Esophagus muscularis mucosa (tissue), 4 donors: ENCODE measurements at regions of chr7 and their contacts with region 1.

Region 1: DNA sequence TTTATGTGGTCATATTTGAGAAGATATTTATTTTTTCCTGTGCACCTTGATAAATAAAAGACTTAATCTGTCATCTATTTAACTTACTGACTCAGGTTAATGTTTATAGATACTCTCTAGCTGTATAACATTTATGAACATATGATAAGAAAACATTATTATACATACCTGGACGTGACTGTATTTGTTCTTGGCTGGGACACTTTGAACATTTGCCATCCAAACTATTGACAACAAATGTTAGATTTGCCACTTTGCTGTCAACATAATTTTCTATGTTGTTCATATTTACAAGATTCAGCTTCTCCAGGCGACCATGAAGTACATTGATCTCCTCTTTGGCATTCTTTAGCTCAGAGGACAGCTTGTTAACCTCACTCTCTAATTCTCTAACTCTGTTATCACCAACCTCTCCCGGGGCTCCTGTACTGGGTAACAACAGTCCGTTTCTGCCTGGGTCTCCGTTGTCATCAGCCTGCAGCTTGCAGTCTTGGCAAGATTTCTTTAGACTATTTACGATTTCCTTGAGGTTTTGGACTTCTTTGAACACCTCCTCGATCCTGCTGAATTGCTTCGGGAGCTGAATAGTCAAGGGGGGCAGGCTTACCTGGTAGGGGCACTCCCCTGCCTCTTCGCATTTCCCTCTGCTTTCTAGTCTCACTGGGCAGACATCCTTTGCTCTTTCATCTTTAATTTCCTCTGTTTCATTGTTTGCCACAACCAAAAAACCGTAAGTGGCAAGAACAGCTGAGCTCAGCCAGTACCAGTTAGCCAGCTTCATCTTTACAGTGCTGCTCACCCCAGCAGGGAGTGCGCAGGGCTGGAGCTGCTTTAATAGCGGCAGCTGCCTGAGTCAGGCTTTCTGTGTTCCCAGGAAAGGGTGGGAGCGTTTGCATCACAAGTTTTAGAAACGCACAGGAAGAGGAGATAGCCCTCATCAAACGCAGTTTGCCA is at the start of gene FGL2:
- DNase-seq: no peak
- H3K4me3 ChIP-seq: peak within 1 kb of the TSS; percentile 51 to 71 (median 66)
- H3K27ac ChIP-seq: peak within 1 kb of the TSS; percentile 81 to 88 (median 83)
- H3K4me1 ChIP-seq: peaks cover 7 to 39% (median 29%) of the 10 kb centered on the region in 4 donors
- H3K27me3 ChIP-seq: no peaks in the 10 kb centered on the region
- CTCF ChIP-seq: no peak
- EP300 ChIP-seq: no peak
- POLR2A ChIP-seq: no peak
- total RNA-seq, gene FGL2: 217 to 349 (median 305) TPM

Region 2: GRCh38 chr7:77247206-77247850 is 48.0 kb after region 1 on chr7:
- intact Hi-C with region 1: loop called (anchors 5 kb)
- DNase-seq: no peak
- H3K4me3 ChIP-seq: no peak overlapping the region
- H3K27ac ChIP-seq: no peak overlapping the region
- H3K4me1 ChIP-seq: peaks cover 16 to 52% (median 45%) of the 10 kb centered on the region in 4 donors
- H3K27me3 ChIP-seq: no peaks in the 10 kb centered on the region
- CTCF ChIP-seq: peak; percentile 84 to 87 (median 84)
- EP300 ChIP-seq: no peak
- POLR2A ChIP-seq: no peak

Region 3: DNA sequence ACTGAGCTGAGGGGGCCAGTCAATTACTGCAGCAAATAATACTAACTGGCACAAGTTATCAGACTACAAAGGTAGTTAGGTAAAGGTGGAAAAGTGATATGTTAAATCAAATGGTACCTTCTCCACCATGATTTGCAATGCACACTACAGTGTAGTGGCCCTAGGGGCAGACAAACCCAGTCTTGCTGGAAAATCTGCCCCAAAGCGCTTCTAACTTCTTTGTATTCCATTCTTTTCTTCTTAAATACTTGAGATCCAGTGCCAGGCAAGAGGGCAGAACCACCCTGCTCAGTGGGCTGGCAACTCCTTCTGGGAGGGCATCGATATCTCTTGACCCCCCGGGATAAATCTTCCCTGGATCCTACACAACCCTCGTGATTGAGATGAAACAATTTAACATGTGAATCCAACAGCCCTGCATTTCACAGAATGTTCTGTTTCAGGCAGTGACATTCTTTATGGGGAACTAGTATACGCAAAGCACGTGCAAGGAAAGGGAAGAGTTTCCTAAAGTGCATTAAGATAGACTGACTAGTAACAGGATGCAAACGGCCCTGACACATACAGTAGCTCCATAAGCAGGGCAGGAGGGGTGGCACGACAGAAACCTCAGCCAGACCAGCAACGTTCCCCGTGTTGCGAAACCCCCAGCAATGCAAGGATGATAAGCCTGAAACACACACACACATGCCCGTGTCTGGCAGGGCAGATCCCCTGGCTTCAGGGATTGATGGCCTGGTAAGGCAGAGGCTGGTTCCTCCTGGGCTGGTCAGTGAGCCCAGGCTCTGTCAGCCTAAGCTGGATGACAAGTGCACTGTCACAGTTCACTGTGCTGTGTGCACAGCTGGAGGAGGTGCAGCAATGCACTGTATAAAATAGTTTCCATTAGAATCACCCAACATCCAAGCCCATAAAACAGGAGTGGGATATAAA is 127.7 kb after region 1 on chr7:
- intact Hi-C with region 1: loop called (anchors 5 kb)
- DNase-seq: no peak
- H3K4me3 ChIP-seq: peak overlapping the region in 1 of 4 donors; percentile 3
- H3K27ac ChIP-seq: peak overlapping the region; percentile 78 to 84 (median 79)
- H3K4me1 ChIP-seq: peaks cover 34 to 73% (median 59%) of the 10 kb centered on the region in 4 donors
- H3K27me3 ChIP-seq: no peaks in the 10 kb centered on the region
- CTCF ChIP-seq: no peak
- EP300 ChIP-seq: peak; percentile 37
- POLR2A ChIP-seq: no peak

Region 4: GRCh38 chr7:77536413-77537135 is 337.3 kb after region 1 on chr7:
- intact Hi-C with region 1: loop called (anchors 5 kb)
- DNase-seq: peak; percentile 99
- H3K4me3 ChIP-seq: peak overlapping the region; percentile 89 to 100 (median 100)
- H3K27ac ChIP-seq: peak overlapping the region; percentile 95 to 100 (median 98)
- H3K4me1 ChIP-seq: peaks cover 24 to 36% (median 35%) of the 10 kb centered on the region in 4 donors
- H3K27me3 ChIP-seq: no peaks in the 10 kb centered on the region
- CTCF ChIP-seq: no peak
- EP300 ChIP-seq: no peak
- POLR2A ChIP-seq: peak; percentile 78